ENCODE measurements at regions of chr1 and their contacts with region 1.

Region 1: DNA sequence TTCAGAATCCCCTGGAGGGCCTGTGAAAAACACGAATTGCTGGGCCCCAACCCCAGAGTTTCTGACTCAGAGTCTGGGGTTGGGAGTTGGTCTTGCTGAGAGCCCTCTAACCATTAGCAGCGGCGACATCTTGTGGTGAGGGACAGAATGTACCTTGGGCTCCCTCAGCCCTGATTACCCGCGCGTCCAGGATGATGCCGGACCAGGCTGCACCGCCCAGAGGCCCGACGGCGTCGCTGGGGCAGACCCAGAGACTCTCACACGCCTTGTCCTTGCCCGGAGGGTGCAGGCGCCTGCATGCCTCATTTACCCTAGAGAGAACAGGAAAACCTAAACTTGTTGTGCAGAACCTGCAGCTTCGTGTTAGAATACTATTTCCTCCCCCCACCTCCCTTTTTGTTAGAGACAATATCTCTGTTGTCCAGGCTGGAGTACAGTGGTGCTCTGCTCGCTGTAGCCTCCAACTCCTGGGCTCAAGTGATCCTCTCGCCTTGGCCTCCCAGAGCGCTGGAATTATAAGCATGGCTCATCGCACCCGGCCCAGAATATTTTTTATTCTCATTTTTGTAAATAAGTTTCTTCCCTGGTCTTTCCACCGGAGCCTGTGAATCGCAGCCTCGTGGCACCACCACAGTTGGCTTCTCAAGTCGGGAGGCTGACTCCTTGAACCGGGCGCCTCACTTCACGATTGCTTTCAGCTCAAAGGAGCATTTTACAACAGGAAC is 22.2 kb upstream of the RD3 start:
- DNase-seq: peak; percentile 99
- H3K4me3 Mint-ChIP-seq: no peak overlapping the region
- H3K27ac Mint-ChIP-seq: peak overlapping the region; percentile 7
- H3K4me1 Mint-ChIP-seq: peaks cover 41% of the 10 kb centered on the region
- H3K27me3 Mint-ChIP-seq: no peaks in the 10 kb centered on the region
- CTCF ChIP-seq: peak; percentile 96

Region 2: DNA sequence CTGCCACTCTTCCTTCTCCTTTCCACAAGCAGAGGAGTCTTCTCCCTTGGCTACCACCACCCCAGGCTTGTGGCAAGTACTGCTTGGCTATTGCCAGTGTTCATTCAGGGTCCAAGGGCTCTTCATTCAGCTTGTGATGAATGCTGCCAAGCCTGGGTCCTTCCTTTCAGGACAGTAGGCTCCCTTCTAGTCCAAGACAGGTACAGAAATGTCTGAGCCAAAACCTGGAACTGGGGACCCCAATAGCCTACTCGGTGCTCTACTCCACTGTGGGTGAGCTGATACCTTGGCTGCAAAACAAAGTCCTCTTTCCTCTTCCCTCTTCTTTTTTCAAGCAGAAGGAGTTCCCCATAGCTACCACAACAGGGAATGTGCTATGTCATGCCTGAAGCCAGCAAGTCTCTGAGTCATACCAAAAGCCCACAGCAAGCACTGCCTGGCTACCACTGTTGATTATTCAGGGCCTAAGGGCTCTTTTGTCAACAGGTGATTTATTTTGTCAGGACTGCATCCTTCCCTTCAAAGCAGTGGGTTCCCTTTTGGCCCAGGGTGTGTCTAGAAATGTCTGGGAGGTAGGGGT is 916.5 kb before region 1 on chr1:
- CTCF ChIA-PET with region 1: no interaction called
- POLR2A ChIA-PET with region 1: no interaction called
- intact Hi-C with region 1: loop called (anchors 5 kb)
- DNase-seq: peak; percentile 94
- H3K4me3 Mint-ChIP-seq: no peak overlapping the region
- H3K27ac Mint-ChIP-seq: peak overlapping the region; percentile 98
- H3K4me1 Mint-ChIP-seq: peaks cover 19% of the 10 kb centered on the region
- H3K27me3 Mint-ChIP-seq: no peaks in the 10 kb centered on the region
- CTCF ChIP-seq: no peak

Region 3: DNA sequence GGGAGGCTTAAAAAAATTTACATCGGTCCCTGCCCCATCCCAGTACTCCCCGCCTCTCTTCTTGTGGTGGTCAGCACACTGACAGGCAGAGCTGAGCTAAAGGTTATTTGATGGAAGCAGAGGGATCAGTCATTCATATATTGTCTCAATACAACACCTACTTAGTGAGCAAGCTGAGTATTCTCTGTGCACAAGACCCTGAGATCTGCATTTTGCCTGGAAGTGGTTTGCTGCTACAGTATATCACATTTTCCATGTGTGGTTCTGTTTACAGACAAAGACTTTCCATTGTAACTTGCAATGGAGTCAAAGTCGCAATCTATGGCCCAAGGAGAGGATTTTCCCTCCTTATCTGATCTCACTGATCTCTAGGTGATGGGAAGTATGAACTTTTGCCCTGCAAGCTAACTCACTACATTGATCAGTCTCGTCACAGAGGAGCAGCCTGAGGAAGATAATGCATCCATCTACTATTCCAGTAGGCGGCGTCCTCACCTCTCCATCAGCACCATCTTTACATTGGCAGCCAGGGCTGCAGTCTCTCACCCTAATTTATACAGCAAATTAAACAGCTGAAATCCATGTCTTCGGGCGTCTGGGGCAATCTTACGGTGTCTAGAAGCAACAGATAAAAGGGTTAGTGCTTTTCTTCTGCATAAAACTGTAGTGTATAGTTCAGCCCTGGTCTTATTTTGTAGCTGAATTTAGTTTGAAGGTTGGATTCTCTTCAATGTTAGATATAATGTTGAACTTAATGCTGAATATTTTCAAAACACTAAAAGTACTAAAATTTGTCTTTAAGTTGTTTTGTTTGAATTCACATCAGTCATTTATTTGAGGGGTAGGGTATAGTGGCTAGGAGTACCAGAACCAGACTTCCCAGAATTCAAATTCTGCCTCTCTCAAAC is 190.8 kb before region 1 on chr1:
- CTCF ChIA-PET with region 1: interaction called, 308 read pairs
- POLR2A ChIA-PET with region 1: interaction called, 27 read pairs
- intact Hi-C with region 1: loop called (anchors 1 kb)
- DNase-seq: peak; percentile 88
- H3K4me3 Mint-ChIP-seq: no peak overlapping the region
- H3K27ac Mint-ChIP-seq: no peak overlapping the region
- H3K4me1 Mint-ChIP-seq: peaks cover 15% of the 10 kb centered on the region
- H3K27me3 Mint-ChIP-seq: no peaks in the 10 kb centered on the region
- CTCF ChIP-seq: peak; percentile 98

Region 4: GRCh38 chr1:211476200-211476849 is 37.9 kb before region 1 on chr1:
- CTCF ChIA-PET with region 1: interaction called, 682 read pairs
- POLR2A ChIA-PET with region 1: interaction called, 4 read pairs
- intact Hi-C with region 1: loop called (anchors 1 kb)
- DNase-seq: peak; percentile 93
- H3K4me3 Mint-ChIP-seq: no peak overlapping the region
- H3K27ac Mint-ChIP-seq: no peak overlapping the region
- H3K4me1 Mint-ChIP-seq: peaks cover 8% of the 10 kb centered on the region
- H3K27me3 Mint-ChIP-seq: no peaks in the 10 kb centered on the region
- CTCF ChIP-seq: peak; percentile 98

Region 5: GRCh38 chr1:211551628-211552460 is 37.7 kb after region 1 on chr1:
- CTCF ChIA-PET with region 1: interaction called, 58 read pairs
- POLR2A ChIA-PET with region 1: interaction called, 6 read pairs
- intact Hi-C with region 1: no loop called
- DNase-seq: peak; percentile 97
- H3K4me3 Mint-ChIP-seq: peak overlapping the region; percentile 36
- H3K27ac Mint-ChIP-seq: peak overlapping the region; percentile 65
- H3K4me1 Mint-ChIP-seq: peaks cover 21% of the 10 kb centered on the region
- H3K27me3 Mint-ChIP-seq: no peaks in the 10 kb centered on the region
- CTCF ChIP-seq: no peak

Region 6: GRCh38 chr1:211632631-211633523 is 118.7 kb after region 1 on chr1:
- CTCF ChIA-PET with region 1: interaction called, 37 read pairs
- POLR2A ChIA-PET with region 1: interaction called, 3 read pairs
- intact Hi-C with region 1: no loop called
- DNase-seq: peak; percentile 98
- H3K4me3 Mint-ChIP-seq: peak overlapping the region; percentile 45
- H3K27ac Mint-ChIP-seq: peak overlapping the region; percentile 84
- H3K4me1 Mint-ChIP-seq: peaks cover 45% of the 10 kb centered on the region
- H3K27me3 Mint-ChIP-seq: no peaks in the 10 kb centered on the region
- CTCF ChIP-seq: no peak

Region 7: DNA sequence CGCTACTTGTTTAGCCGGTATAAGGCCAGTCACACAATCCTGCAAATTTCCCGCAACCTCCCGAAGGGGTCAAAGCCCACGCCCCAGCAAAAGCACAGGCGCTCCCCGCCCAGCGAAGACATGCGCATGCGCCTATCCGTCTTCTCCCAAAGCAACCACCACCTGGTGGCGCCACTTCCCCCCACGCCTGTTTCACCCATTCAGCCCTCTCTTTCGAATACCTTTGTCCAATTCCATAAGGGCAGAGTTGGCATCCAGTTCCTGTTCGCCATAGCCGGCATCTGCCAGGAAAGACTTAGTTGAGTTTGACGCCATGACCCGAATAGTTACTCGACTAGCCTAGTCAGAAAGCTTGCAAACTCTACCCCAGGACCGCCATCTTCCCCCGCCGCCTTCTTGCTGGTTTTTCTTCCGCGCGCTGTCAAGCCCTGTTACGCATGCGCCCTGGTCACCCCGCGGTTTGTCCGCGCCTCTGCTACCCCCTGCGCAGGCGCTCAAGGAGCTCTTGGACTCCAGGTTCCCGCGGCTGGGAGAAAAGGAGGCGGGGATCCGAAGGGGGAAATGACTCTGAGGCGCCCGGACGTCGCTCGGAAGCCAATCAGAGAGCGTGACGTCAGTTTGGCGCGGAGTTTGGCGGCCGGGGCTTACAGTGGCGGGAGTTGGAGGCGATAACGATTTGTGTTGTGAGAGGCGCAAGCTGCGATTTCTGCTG is 521.1 kb after region 1 on chr1 and contains the starts of genes DTL and INTS7:
- CTCF ChIA-PET with region 1: no interaction called
- POLR2A ChIA-PET with region 1: no interaction called
- intact Hi-C with region 1: loop called (anchors 1 kb)
- DNase-seq: peak; percentile 100
- H3K4me3 Mint-ChIP-seq: peak within 1 kb of the TSS; percentile 88
- H3K27ac Mint-ChIP-seq: peak within 1 kb of the TSS; percentile 89
- H3K4me1 Mint-ChIP-seq: peaks cover 65% of the 10 kb centered on the region
- H3K27me3 Mint-ChIP-seq: no peaks in the 10 kb centered on the region
- CTCF ChIP-seq: peak; percentile 99
- total RNA-seq, gene DTL: 20.2 and 34.4 TPM in 2 replicates
- total RNA-seq, gene INTS7: 50.0 and 62.3 TPM in 2 replicates